A549 (cell line): ENCODE measurements at regions of chr1 and their contacts with region 1.

Region 1: GRCh38 chr1:1013105-1013921 is at the start of gene ISG15:
- DNase-seq: peak in 1 of 2 experiments; percentile 61
- ATAC-seq: peak; percentile 89
- H3K4me3 ChIP-seq: peak within 1 kb of the TSS; percentile 60
- H3K27ac ChIP-seq: peak within 1 kb of the TSS; percentile 77 to 81
- H3K4me1 ChIP-seq: peaks cover 5% of the 10 kb centered on the region; the same call in 1 of the 3 replicates
- CTCF ChIP-seq: no peak
- EP300 ChIP-seq: no peak
- POLR2A ChIP-seq: no peak
- RAD21 ChIP-seq: no peak
- polyA plus RNA-seq, gene ISG15: 4.3 and 4.6 TPM in 2 replicates

Region 2: DNA sequence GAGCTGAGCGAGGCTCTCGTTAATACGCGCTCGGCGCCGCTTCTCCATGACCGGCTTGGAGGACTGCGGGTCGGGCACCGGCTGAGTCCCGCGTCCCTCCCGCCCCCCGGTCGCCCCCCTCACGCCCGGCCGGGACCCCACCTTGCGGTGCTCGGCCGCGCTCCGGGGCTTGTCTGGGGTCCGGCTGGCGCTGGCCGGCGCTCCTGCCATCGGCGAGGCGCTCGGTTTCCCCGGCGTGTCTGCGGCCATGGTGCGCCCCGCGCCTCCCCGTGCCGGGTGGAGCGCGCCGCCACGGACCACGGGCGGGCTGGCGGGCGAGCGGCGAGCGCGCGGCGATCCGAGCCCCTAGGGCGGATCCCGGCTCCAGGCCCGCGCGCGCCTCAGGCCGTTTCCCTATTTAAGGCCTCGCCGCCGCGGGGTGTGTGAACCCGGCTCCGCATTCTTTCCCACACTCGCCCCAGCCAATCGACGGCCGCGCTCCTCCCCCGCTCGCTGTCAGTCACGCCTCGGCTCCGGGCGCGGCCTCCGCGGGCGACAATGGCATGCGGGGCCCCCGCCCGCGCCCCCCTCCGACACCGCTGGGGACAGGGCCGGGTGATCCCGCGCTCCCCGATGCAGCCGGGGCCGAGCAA is 13.5 kb before region 1 on chr1 and contains the start of gene HES4:
- CTCF ChIA-PET with region 1: interaction called, 52 read pairs
- POLR2A ChIA-PET with region 1: interaction called, 3 read pairs
- DNase-seq: peak in 1 of 2 experiments; percentile 92
- ATAC-seq: peak; percentile 51 to 52
- H3K4me3 ChIP-seq: peak within 1 kb of the TSS; percentile 77
- H3K27ac ChIP-seq: peak within 1 kb of the TSS; percentile 97 to 100
- H3K4me1 ChIP-seq: peaks cover 17% of the 10 kb centered on the region
- CTCF ChIP-seq: no peak
- EP300 ChIP-seq: no peak
- POLR2A ChIP-seq: peak; percentile 86
- RAD21 ChIP-seq: no peak
- polyA plus RNA-seq, gene HES4: 4.2 and 5.9 TPM in 2 replicates

Region 3: DNA sequence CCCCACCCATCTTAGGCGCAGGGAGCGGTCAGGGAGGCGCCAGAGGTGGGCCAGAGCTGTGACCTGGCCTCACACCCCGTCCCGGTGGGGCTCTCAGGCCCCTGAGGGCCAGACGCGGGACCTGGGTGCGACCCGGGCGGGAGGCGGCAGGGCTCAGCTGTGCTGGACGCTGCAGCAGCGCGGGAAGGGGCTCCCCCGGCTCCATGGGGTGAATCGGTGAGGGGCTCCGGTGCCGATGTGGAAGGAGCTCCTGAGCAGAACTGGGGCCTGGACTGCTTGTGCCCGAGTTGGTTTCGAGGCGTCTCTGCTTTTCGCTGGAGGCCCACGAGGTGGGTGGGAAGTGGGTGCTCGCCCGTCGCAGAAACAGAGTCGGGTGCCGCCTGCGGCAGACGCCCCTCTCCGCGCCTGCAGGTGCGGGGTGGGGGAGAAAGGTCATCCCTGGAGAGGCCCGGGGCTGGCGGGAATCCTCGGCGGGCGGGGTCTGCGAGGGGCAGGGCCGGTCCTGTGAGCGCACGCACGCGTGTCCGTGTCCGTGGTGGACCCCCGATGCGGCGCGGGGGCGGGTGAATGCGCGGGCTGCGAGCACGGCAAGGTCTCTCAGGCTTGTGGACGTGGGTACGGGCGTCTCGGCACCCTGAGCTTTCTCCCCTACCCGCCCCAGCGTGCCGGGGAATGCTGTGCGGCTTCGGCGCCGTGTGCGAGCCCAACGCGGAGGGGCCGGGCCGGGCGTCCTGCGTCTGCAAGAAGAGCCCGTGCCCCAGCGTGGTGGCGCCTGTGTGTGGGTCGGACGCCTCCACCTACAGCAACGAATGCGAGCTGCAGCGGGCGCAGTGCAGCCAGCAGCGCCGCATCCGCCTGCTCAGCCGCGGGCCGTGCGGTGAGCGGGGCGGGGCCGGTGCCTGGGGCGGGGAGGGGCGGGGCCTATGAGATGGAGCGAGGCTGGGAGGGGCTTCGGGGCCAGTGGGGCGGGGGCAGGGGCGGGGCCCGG is 27.0 kb after region 1 on chr1:
- CTCF ChIA-PET with region 1: interaction called, 27 read pairs
- POLR2A ChIA-PET with region 1: no interaction called
- DNase-seq: peak in 1 of 2 experiments; percentile 74
- ATAC-seq: peak; percentile 58 to 79
- H3K4me3 ChIP-seq: no peak overlapping the region
- H3K27ac ChIP-seq: peak overlapping the region in 1 of 2 experiments; percentile 74; a peak in 4 of 6 replicates
- H3K4me1 ChIP-seq: peaks cover 9% of the 10 kb centered on the region
- CTCF ChIP-seq: no peak
- EP300 ChIP-seq: no peak
- POLR2A ChIP-seq: no peak
- RAD21 ChIP-seq: no peak

Region 4: DNA sequence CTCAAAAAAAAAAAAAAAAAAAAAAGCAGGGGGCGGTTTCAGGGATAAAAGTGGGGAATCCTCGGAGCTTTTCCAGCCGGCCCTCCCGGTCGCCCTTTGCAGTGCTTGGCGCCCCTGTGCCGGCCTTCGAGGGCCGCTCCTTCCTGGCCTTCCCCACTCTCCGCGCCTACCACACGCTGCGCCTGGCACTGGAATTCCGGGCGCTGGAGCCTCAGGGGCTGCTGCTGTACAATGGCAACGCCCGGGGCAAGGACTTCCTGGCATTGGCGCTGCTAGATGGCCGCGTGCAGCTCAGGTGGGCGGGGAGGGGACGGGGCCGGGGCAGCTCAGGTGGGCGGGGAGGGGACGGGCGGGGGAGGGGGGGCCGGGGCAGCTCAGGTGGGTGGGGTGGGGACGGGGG is 35.5 kb after region 1 on chr1:
- CTCF ChIA-PET with region 1: interaction called, 10 read pairs
- POLR2A ChIA-PET with region 1: no interaction called
- DNase-seq: no peak
- ATAC-seq: no peak
- H3K4me3 ChIP-seq: no peak overlapping the region
- H3K27ac ChIP-seq: no peak overlapping the region
- H3K4me1 ChIP-seq: no peaks in the 10 kb centered on the region
- CTCF ChIP-seq: no peak
- EP300 ChIP-seq: no peak
- POLR2A ChIP-seq: no peak
- RAD21 ChIP-seq: no peak

Region 5: GRCh38 chr1:1079408-1080121 is 66.3 kb after region 1 on chr1:
- CTCF ChIA-PET with region 1: no interaction called
- POLR2A ChIA-PET with region 1: no interaction called
- DNase-seq: peak; percentile 64 to 92
- ATAC-seq: peak; percentile 78 to 87
- H3K4me3 ChIP-seq: peak overlapping the region; percentile 32
- H3K27ac ChIP-seq: peak overlapping the region; percentile 84 to 97
- H3K4me1 ChIP-seq: peaks cover 12% of the 10 kb centered on the region; the same call in 2 of the 3 replicates
- CTCF ChIP-seq: no peak
- EP300 ChIP-seq: no peak
- POLR2A ChIP-seq: peak; percentile 4; the same call in 1 of the 2 replicates
- RAD21 ChIP-seq: no peak